Spleen (tissue), 13 donors: ENCODE measurements at regions of chr1 and their contacts with region 1.

Region 1: GRCh38 chr1:165697881-165698760 is at the start of gene ALDH9A1:
- DNase-seq: peak; percentile 97
- H3K4me3 ChIP-seq: peak within 1 kb of the TSS; percentile 62 to 91 (median 72)
- H3K27ac ChIP-seq: peak within 1 kb of the TSS; percentile 93 to 99 (median 97)
- H3K4me1 ChIP-seq: peaks cover 17 to 49% (median 34%) of the 10 kb centered on the region in 6 donors
- H3K27me3 ChIP-seq: no peaks in the 10 kb centered on the region
- CTCF ChIP-seq: peak in 7 of 11 experiments; percentile 9 to 44 (median 24)
- POLR2A ChIP-seq: peak in 2 of 3 donors; percentile 50 to 75
- total RNA-seq, gene ALDH9A1: 51.3 to 103 (median 69.3) TPM

Region 2: DNA sequence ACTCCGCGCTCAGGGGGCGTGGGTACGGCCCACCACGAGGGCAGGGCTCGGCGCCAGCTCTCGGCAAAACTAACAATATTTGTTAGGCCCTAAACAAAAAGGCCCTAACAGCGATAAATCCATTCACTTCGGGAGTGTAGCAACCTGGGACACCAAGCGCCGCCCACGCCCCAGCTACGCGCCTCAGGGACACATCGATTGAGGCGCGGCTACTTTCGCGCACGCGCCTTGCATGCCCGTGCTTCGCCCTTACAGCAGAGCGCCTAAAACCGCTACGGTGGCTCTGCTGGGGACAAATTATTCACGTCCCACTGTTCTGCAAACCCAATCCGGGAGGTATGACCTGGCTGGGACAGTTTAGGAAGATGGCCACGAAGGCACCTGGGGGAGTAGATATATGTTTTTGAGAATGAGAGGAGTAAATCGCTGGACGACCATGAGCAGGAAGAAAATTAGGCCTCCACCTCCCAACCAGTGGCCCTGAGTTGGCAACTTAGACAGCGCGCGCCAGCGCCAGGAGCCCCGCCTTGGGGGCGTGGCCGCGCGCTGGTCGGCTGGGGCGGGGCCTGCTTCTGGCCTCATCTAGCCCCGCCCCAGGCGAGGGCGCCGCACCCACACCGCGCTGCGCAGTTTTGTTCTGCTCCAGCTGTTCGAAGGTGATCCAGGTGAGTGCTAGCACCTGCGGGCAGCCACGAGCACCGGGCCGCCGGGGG is 67.3 kb before region 1 on chr1 and contains the start of gene MGST3:
- intact Hi-C with region 1: loop called (anchors 5 kb)
- DNase-seq: peak; percentile 99
- H3K4me3 ChIP-seq: peak within 1 kb of the TSS; percentile 58 to 94 (median 74)
- H3K27ac ChIP-seq: peak within 1 kb of the TSS; percentile 87 to 95 (median 90)
- H3K4me1 ChIP-seq: peaks cover 20 to 54% (median 43%) of the 10 kb centered on the region in 6 donors
- H3K27me3 ChIP-seq: no peaks in the 10 kb centered on the region
- CTCF ChIP-seq: peak in 1 of 11 experiments; percentile 22
- POLR2A ChIP-seq: peak in 2 of 3 donors; percentile 3 to 71
- total RNA-seq, gene MGST3: 47.8 to 109 (median 87.5) TPM